Posterior cingulate gyrus (tissue), 11 donors: ENCODE measurements at regions of chr16 and their contacts with region 1.

Region 1: GRCh38 chr16:87636072-87636684 is 33.9 kb downstream of the JPH3 start:
- DNase-seq: peak; percentile 56 to 96 (median 81)

Region 2: DNA sequence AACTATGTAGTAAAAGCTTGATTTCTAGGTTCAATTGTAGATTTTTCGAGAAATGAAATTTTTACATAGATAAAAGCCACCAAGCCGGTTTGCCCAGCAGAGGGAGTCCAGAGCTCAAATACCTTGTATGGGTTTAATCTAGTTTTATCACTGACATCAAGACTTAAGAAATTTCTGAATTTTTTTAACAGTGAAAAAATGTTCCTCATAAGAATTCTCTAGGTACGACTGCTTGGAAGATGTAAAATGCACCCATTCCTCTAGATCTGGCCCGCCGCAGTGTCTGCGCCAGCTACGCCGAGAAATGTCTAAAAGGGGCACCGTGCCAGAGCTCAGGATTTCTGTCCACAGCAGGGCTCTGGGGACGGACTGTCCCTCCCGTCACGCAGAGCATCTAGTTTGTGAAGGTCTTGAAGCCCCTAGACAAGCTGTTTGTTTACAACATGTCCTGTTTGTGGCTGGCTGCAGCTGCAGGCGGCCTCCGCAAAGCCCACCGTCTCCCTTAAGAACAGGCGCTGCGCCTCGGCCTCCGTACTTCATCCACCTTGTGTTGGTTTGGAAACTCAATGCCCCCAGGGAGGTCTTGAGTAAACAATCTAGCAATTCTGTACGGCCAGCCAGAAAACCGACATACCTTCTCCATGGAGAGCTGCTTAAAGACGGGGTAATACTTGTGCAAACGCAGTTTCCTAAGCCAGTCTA is 219.2 kb before region 1 on chr16:
- intact Hi-C with region 1: loop called (anchors 2 kb)
- DNase-seq: peak in 3 of 10 donors; percentile 36 to 83 (median 72)

Region 3: DNA sequence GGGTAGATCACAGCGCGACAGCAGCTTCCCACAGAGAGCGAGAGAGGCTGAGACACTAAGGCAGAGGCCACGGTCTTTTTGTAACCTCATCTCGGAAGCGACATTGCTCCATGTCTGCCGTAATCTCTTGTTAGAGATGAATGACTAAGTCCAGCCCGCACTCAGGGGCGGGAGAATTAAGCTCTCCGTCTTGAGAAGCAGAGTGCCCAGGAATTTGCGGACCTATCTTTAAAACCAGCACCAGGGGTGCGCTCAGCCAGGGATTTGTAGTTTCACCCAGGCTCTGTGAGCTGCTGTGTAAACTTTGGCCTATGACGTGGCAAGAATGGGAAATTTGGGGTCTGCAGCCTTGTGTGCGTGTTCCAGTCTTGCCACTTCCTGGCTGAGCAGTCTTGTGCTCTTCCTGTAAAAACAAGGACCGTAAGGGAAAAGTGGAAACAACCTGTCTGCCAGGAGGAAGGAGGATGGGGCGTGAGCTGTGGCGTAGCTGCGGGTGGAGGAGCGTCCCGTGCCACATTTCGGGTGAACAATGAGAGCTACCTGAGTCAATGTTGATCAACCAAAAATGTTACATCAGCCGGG is 49.9 kb before region 1 on chr16:
- intact Hi-C with region 1: loop called (anchors 2 kb)
- DNase-seq: peak in 1 of 10 donors; percentile 40